Activated CD8-positive, alpha-beta T cell treated with anti-CD3 and anti-CD28 coated beads, Interleukin-2, amount 10 ng/mL, durations not matched to agents 7 days and 5 days (primary cell): ENCODE measurements at regions of chr2 and their contacts with region 1.

Region 1: GRCh38 chr2:38750891-38751595 is at the start of gene SRSF7:
- DNase-seq: peak; percentile 98
- ATAC-seq: peak; percentile 79
- H3K4me3 Mint-ChIP-seq: peak within 1 kb of the TSS; percentile 93
- H3K27ac Mint-ChIP-seq: peak within 1 kb of the TSS; percentile 98
- H3K4me1 Mint-ChIP-seq: peaks cover 49% of the 10 kb centered on the region
- H3K27me3 Mint-ChIP-seq: no peaks in the 10 kb centered on the region
- total RNA-seq, gene SRSF7: 348 to 356 TPM

Region 2: GRCh38 chr2:38398759-38399158 is 352.3 kb before region 1 on chr2:
- CTCF ChIA-PET with region 1: no interaction called
- POLR2A ChIA-PET with region 1: no interaction called
- DNase-seq: no peak
- ATAC-seq: no peak
- H3K4me3 Mint-ChIP-seq: no peak overlapping the region
- H3K27ac Mint-ChIP-seq: no peak overlapping the region
- H3K4me1 Mint-ChIP-seq: peaks cover 12% of the 10 kb centered on the region
- H3K27me3 Mint-ChIP-seq: peaks cover 5% of the 10 kb centered on the region

Region 3: DNA sequence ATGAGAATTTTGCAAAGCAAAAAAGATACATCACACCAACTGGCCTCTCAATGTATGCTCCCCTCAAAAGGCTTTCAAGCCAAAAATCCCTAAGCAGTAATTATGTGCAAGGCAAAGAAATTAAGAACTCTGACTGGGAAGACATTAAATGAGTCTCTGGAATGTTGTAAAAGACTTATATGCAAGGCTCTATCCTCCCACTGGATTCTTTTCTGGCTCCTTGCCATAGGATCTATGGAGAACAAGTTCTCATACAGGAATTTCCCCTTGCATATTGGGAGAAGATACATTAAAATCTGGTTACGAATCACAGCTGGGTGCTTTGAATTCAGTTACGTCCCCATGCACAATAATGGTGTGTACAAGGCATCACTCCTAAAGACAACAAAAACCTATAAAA is 300.5 kb before region 1 on chr2:
- CTCF ChIA-PET with region 1: no interaction called
- POLR2A ChIA-PET with region 1: no interaction called
- DNase-seq: no peak
- ATAC-seq: no peak
- H3K4me3 Mint-ChIP-seq: no peak overlapping the region
- H3K27ac Mint-ChIP-seq: no peak overlapping the region
- H3K4me1 Mint-ChIP-seq: no peaks in the 10 kb centered on the region
- H3K27me3 Mint-ChIP-seq: peaks cover 2% of the 10 kb centered on the region

Region 4: GRCh38 chr2:38535744-38536506 is 215.1 kb before region 1 on chr2:
- CTCF ChIA-PET with region 1: no interaction called
- POLR2A ChIA-PET with region 1: interaction called, 17 read pairs
- DNase-seq: peak; percentile 83
- ATAC-seq: peak; percentile 97
- H3K4me3 Mint-ChIP-seq: peak overlapping the region; percentile 50
- H3K27ac Mint-ChIP-seq: no peak overlapping the region
- H3K4me1 Mint-ChIP-seq: peaks cover 3% of the 10 kb centered on the region
- H3K27me3 Mint-ChIP-seq: peaks cover 35% of the 10 kb centered on the region

Region 5: DNA sequence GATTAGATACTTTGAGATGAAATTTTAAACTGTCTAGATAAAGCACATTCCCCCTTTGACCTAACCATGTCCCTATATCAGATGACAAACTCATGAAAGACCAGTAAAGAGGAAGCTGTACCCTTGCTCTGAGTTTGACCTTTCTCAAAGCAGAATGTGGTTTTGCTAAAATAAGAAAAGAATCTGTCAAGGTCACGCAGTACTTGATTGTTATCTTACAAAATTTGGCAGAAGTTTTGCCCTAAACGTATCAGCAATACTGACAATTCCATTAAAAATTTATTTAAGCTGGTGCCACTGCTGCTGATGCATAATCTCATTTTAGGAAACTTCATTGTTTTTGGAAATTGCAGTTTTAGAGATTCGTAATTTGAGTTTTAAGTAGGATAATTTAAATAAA is 116.4 kb before region 1 on chr2:
- CTCF ChIA-PET with region 1: no interaction called
- POLR2A ChIA-PET with region 1: no interaction called
- DNase-seq: no peak
- ATAC-seq: peak; percentile 73
- H3K4me3 Mint-ChIP-seq: peak overlapping the region; percentile 25
- H3K27ac Mint-ChIP-seq: peak overlapping the region; percentile 57
- H3K4me1 Mint-ChIP-seq: peaks cover 32% of the 10 kb centered on the region
- H3K27me3 Mint-ChIP-seq: no peaks in the 10 kb centered on the region

Region 6: GRCh38 chr2:38665854-38666555 is 85.0 kb before region 1 on chr2 and contains the start of gene GALM:
- CTCF ChIA-PET with region 1: no interaction called
- POLR2A ChIA-PET with region 1: interaction called, 63 read pairs
- DNase-seq: peak; percentile 73
- ATAC-seq: peak; percentile 45
- H3K4me3 Mint-ChIP-seq: peak within 1 kb of the TSS; percentile 82
- H3K27ac Mint-ChIP-seq: peak within 1 kb of the TSS; percentile 89
- H3K4me1 Mint-ChIP-seq: peaks cover 63% of the 10 kb centered on the region
- H3K27me3 Mint-ChIP-seq: no peaks in the 10 kb centered on the region
- total RNA-seq, gene GALM: 27.6 TPM

Region 7: DNA sequence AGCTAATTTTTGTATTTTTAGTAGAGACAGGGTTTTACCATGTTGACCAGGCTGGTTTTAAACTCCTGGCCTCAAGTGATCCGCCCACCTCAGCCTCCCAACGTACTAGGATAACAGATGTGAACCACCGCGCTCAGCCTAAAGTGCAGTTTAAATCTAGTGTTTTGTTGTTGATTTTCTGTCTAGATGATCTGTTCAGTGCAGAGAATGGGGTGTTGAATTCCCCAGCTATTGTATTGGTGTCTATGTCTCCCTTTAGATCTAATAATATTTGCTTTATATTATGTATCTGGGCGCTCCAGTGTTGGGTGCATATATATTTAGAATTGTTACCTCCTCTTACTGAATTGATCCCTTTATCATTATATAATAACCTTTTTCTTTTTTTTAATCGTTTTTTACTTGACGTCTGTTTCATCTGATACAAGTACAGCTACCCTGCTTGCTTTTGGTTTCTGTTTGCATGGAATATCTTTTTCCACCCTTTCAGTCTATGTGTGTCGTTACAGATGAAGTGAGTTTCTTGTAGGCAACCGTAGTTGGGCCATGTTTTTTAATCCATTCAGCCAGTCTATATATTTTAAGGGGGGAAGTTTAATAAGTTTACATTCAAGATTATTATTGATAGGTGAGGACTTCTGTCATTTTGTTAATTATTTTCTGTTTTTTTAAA is 50.8 kb before region 1 on chr2:
- CTCF ChIA-PET with region 1: no interaction called
- POLR2A ChIA-PET with region 1: interaction called, 10 read pairs
- DNase-seq: no peak
- ATAC-seq: peak; percentile 71
- H3K4me3 Mint-ChIP-seq: peak overlapping the region; percentile 44
- H3K27ac Mint-ChIP-seq: peak overlapping the region; percentile 76
- H3K4me1 Mint-ChIP-seq: peaks cover 33% of the 10 kb centered on the region
- H3K27me3 Mint-ChIP-seq: no peaks in the 10 kb centered on the region

Region 8: GRCh38 chr2:38765149-38765548 is 14.1 kb after region 1 on chr2:
- CTCF ChIA-PET with region 1: interaction called, 5 read pairs
- POLR2A ChIA-PET with region 1: interaction called, 84 read pairs
- DNase-seq: no peak
- ATAC-seq: no peak
- H3K4me3 Mint-ChIP-seq: no peak overlapping the region
- H3K27ac Mint-ChIP-seq: no peak overlapping the region
- H3K4me1 Mint-ChIP-seq: peaks cover 13% of the 10 kb centered on the region
- H3K27me3 Mint-ChIP-seq: no peaks in the 10 kb centered on the region

Region 9: DNA sequence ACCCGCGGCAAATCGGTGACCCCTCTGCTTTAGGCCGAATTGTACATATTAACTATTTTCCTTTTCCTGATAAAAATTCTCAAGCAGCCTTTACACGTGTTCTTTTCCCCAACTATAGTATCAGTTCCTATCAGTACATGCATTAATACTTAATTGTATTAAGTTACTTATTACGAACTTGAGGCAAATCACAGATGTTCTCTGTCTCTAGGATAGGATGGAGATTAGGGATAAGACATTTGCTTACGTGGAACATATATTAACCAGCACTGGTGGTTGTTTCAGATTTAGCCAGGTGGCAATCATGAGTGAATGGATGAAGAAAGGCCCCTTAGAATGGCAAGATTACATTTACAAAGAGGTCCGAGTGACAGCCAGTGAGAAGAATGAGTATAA is 27.6 kb after region 1 on chr2:
- CTCF ChIA-PET with region 1: no interaction called
- POLR2A ChIA-PET with region 1: interaction called, 23 read pairs
- DNase-seq: no peak
- ATAC-seq: no peak
- H3K4me3 Mint-ChIP-seq: peak overlapping the region; percentile 94
- H3K27ac Mint-ChIP-seq: peak overlapping the region; percentile 93
- H3K4me1 Mint-ChIP-seq: peaks cover 18% of the 10 kb centered on the region
- H3K27me3 Mint-ChIP-seq: peaks cover 15% of the 10 kb centered on the region